A549 (cell line): ENCODE measurements at regions of chr10 and their contacts with region 1.

Region 1: GRCh38 chr10:67864607-67865371 is 19.7 kb upstream of the SIRT1 start:
- DNase-seq: no peak
- ATAC-seq: no peak
- H3K4me3 ChIP-seq: no peak overlapping the region
- H3K27ac ChIP-seq: no peak overlapping the region
- H3K4me1 ChIP-seq: peaks cover 6% of the 10 kb centered on the region; the same call in 1 of the 3 replicates
- CTCF ChIP-seq: no peak
- EP300 ChIP-seq: no peak
- POLR2A ChIP-seq: no peak
- RAD21 ChIP-seq: no peak

Region 2: GRCh38 chr10:67539312-67539711 is 325.5 kb before region 1 on chr10:
- CTCF ChIA-PET with region 1: no interaction called
- POLR2A ChIA-PET with region 1: no interaction called
- DNase-seq: no peak
- ATAC-seq: no peak
- H3K4me3 ChIP-seq: no peak overlapping the region
- H3K27ac ChIP-seq: no peak overlapping the region
- H3K4me1 ChIP-seq: no peaks in the 10 kb centered on the region
- CTCF ChIP-seq: no peak
- EP300 ChIP-seq: no peak
- POLR2A ChIP-seq: no peak
- RAD21 ChIP-seq: no peak

Region 3: DNA sequence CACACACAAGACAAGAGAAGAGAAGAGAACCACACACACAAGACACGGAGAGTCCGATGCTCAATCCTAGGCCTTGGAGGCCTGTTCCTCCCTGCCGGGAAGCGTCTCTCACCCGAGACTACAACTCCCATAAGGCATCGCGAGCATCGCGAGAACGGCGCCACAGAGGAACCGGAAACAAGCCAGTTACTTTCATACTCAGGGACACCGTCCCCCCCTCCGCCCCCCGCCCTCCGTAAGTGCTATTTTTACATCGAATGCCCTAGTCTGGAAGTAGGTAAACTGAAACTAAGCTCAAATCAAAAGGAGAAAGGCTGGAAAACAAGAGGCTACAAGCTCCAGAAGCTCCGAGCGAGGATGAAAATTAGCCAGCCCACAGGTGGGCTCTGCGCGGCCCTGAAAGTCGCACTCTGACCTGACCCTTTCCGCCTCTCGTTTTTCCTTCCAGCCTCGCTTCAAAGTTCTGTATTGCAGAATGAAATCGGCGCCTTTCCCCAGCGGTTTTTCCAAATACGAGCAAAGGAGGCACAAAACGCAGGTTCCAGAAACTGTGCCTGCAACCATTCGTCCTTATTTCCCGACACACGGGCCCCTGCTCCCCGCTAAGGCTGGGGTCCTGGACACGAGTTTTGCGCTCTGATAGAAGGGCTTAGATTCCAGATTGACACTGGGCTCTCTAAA is 15.3 kb before region 1 on chr10:
- CTCF ChIA-PET with region 1: interaction called, 46 read pairs
- POLR2A ChIA-PET with region 1: no interaction called
- DNase-seq: peak; percentile 90 to 96
- ATAC-seq: peak; percentile 99 to 100
- H3K4me3 ChIP-seq: peak overlapping the region; percentile 59
- H3K27ac ChIP-seq: peak overlapping the region; percentile 89 to 90
- H3K4me1 ChIP-seq: peaks cover 5% of the 10 kb centered on the region; the same call in 1 of the 3 replicates
- CTCF ChIP-seq: no peak
- EP300 ChIP-seq: no peak
- POLR2A ChIP-seq: peak; percentile 58
- RAD21 ChIP-seq: no peak